ENCODE measurements at regions of chr6 and their contacts with region 1.

Region 1: DNA sequence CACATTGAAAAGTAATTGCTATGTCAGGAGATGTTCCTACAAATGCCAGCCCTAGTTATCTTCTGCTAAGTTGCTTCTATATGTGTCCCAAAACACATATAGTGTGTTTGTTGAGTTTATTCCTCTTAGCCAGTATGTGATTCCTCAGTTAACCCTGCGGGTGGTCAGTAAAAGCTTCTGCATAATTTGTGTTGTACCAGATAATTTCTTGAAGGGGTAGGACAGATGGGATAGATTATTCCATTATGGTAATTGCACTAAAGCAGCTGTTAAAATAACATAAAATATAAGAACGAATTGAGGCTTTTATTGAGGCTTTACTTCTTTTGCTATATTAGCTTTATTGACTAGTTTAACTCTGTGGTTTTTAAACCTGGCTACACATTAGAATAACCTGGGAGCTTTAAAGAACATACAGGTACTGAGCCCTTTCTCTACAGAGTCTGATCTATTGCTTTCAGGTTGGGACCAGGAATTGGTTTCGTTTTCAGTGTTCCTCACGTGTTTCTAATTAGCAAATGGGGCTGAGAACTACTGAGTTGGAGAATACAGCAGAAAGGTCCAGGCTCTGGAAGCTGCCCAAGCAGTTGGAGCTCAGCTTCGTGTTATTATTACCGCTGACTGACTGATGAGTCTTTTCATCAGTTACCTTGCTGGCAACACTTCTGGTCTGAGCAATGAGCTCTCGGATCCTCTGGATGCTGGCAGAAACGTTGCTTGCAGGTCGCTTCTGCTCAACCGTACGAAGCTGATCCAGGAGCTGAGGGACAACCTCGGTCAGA is 56.9 kb downstream of the FAM229B start:
- DNase-seq: no peak
- ATAC-seq: no peak
- H3K4me3 Mint-ChIP-seq: no peak overlapping the region
- H3K27ac Mint-ChIP-seq: no peak overlapping the region
- H3K4me1 Mint-ChIP-seq: peaks cover 2% of the 10 kb centered on the region
- H3K27me3 Mint-ChIP-seq: peaks cover 2% of the 10 kb centered on the region

Region 2: GRCh38 chr6:112163295-112164257 is 19.2 kb after region 1 on chr6:
- CTCF ChIA-PET with region 1: interaction called, 22 read pairs
- POLR2A ChIA-PET with region 1: no interaction called
- intact Hi-C with region 1: no loop called
- DNase-seq: peak; percentile 90
- ATAC-seq: peak; percentile 98
- H3K4me3 Mint-ChIP-seq: peak overlapping the region; percentile 43
- H3K27ac Mint-ChIP-seq: peak overlapping the region; percentile 51
- H3K4me1 Mint-ChIP-seq: peaks cover 16% of the 10 kb centered on the region
- H3K27me3 Mint-ChIP-seq: peaks cover 35% of the 10 kb centered on the region

Measured in activated CD4-positive, alpha-beta T cell treated with anti-CD3 and anti-CD28 coated beads for 36 hours (primary cell).